HepG2 (cell line): ENCODE measurements at regions of chr18 and their contacts with region 1.

Region 1: GRCh38 chr18:48896690-48897511 is 53.9 kb downstream of the SMAD7 start:
- DNase-seq: peak; percentile 98
- ATAC-seq: peak; percentile 81
- H3K4me3 ChIP-seq: peak overlapping the region; percentile 22 to 61 (median 42); a peak in 5 of 6 replicates
- H3K27ac ChIP-seq: peak overlapping the region; percentile 41
- H3K4me1 ChIP-seq: peaks cover 71% of the 10 kb centered on the region
- H3K27me3 ChIP-seq: no peaks in the 10 kb centered on the region; a peak in 1 of 5 replicates
- CTCF ChIP-seq: peak; percentile 84
- EP300 ChIP-seq: peak in 1 of 2 experiments; percentile 37; a peak in 1 of 4 replicates
- POLR2A ChIP-seq: no peak
- RAD21 ChIP-seq: peak; percentile 96

Region 2: GRCh38 chr18:48605408-48605845 is 291.5 kb before region 1 on chr18:
- CTCF ChIA-PET with region 1: no interaction called
- POLR2A ChIA-PET with region 1: no interaction called
- in situ Hi-C with region 1: no loop called
- intact Hi-C with region 1: no loop called
- DNase-seq: peak; percentile 73
- ATAC-seq: peak; percentile 99
- H3K4me3 ChIP-seq: no peak overlapping the region
- H3K27ac ChIP-seq: no peak overlapping the region
- H3K4me1 ChIP-seq: peaks cover 34% of the 10 kb centered on the region
- H3K27me3 ChIP-seq: no peaks in the 10 kb centered on the region
- CTCF ChIP-seq: peak; percentile 88
- EP300 ChIP-seq: peak in 1 of 2 experiments; percentile 13; a peak in 1 of 4 replicates
- POLR2A ChIP-seq: no peak
- RAD21 ChIP-seq: peak; percentile 92

Region 3: GRCh38 chr18:48781163-48781987 is 115.5 kb before region 1 on chr18:
- CTCF ChIA-PET with region 1: interaction called, 7 read pairs
- POLR2A ChIA-PET with region 1: interaction called, 7 read pairs
- in situ Hi-C with region 1: loop called (anchors 5 kb)
- intact Hi-C with region 1: loop called (anchors 2 kb)
- DNase-seq: peak; percentile 92
- ATAC-seq: peak; percentile 87
- H3K4me3 ChIP-seq: peak overlapping the region; percentile 45 to 71 (median 46)
- H3K27ac ChIP-seq: peak overlapping the region; percentile 98
- H3K4me1 ChIP-seq: peaks cover 55% of the 10 kb centered on the region
- H3K27me3 ChIP-seq: no peaks in the 10 kb centered on the region
- CTCF ChIP-seq: peak; percentile 11; the same call in 1 of the 2 replicates
- EP300 ChIP-seq: peak; percentile 50 to 74; a peak in 2 of 4 replicates
- POLR2A ChIP-seq: peak; percentile 57 to 65; a peak in 2 of 4 replicates
- RAD21 ChIP-seq: peak; percentile 43; the same call in 1 of the 2 replicates

Region 4: GRCh38 chr18:48854780-48855179 is 42.1 kb before region 1 on chr18:
- CTCF ChIA-PET with region 1: no interaction called
- POLR2A ChIA-PET with region 1: no interaction called
- in situ Hi-C with region 1: no loop called
- intact Hi-C with region 1: loop called (anchors 1 kb)
- DNase-seq: no peak
- ATAC-seq: no peak
- H3K4me3 ChIP-seq: no peak overlapping the region
- H3K27ac ChIP-seq: no peak overlapping the region
- H3K4me1 ChIP-seq: no peaks in the 10 kb centered on the region
- H3K27me3 ChIP-seq: no peaks in the 10 kb centered on the region
- CTCF ChIP-seq: no peak
- EP300 ChIP-seq: no peak
- POLR2A ChIP-seq: no peak
- RAD21 ChIP-seq: no peak

Region 5: GRCh38 chr18:48875942-48876511 is 20.9 kb before region 1 on chr18:
- CTCF ChIA-PET with region 1: no interaction called
- POLR2A ChIA-PET with region 1: interaction called, 11 read pairs
- in situ Hi-C with region 1: no loop called
- intact Hi-C with region 1: loop called (anchors 1 kb)
- DNase-seq: peak; percentile 69
- ATAC-seq: peak; percentile 83
- H3K4me3 ChIP-seq: peak overlapping the region in 2 of 3 experiments; percentile 14 to 57; a peak in 3 of 6 replicates
- H3K27ac ChIP-seq: no peak overlapping the region
- H3K4me1 ChIP-seq: peaks cover 76% of the 10 kb centered on the region
- H3K27me3 ChIP-seq: no peaks in the 10 kb centered on the region; a peak in 1 of 5 replicates
- CTCF ChIP-seq: peak; percentile 15; the same call in 1 of the 2 replicates
- EP300 ChIP-seq: no peak
- POLR2A ChIP-seq: no peak
- RAD21 ChIP-seq: peak; percentile 67

Region 6: GRCh38 chr18:49178736-49179135 is 281.8 kb after region 1 on chr18:
- CTCF ChIA-PET with region 1: no interaction called
- POLR2A ChIA-PET with region 1: no interaction called
- in situ Hi-C with region 1: no loop called
- intact Hi-C with region 1: loop called (anchors 10 kb)
- DNase-seq: peak; percentile 36
- ATAC-seq: peak; percentile 56
- H3K4me3 ChIP-seq: no peak overlapping the region
- H3K27ac ChIP-seq: no peak overlapping the region
- H3K4me1 ChIP-seq: peaks cover 20% of the 10 kb centered on the region
- H3K27me3 ChIP-seq: no peaks in the 10 kb centered on the region
- CTCF ChIP-seq: peak; percentile 68
- EP300 ChIP-seq: no peak
- POLR2A ChIP-seq: no peak
- RAD21 ChIP-seq: peak; percentile 59